ENCODE measurements at regions of chr9 and their contacts with region 1.

Region 1: DNA sequence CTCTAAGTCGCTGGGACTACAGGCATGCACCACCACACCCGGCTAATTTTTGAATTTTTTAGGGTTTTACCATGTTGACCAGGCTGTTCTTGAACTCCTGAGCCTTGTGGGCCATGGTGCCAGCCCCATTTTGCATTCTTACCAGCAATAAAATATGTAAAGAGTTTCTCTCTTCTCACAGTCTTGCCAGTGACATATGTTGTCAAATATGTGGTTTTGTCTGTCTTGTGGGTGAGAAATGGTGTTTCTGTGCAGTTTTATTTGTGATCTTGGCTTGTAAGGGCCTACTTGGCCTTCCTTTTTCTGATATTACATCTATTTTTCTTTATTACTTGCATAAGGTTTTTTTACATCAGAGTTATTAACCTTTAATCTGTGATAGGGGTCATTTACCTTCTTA is 47.1 kb downstream of the SPIN1 start:
- DNase-seq: no peak
- H3K4me3 ChIP-seq: no peak overlapping the region
- H3K27ac ChIP-seq: no peak overlapping the region
- H3K4me1 ChIP-seq: no peaks in the 10 kb centered on the region
- CTCF ChIP-seq: no peak

Region 2: GRCh38 chr9:88476491-88477271 is 41.3 kb after region 1 on chr9:
- CTCF ChIA-PET with region 1: no interaction called
- POLR2A ChIA-PET with region 1: interaction called, 5 read pairs
- intact Hi-C with region 1: loop called (anchors 5 kb)
- DNase-seq: no peak
- H3K4me3 ChIP-seq: no peak overlapping the region
- H3K27ac ChIP-seq: no peak overlapping the region
- H3K4me1 ChIP-seq: no peaks in the 10 kb centered on the region
- CTCF ChIP-seq: no peak